CD4-positive, alpha-beta memory T cell (primary cell): ENCODE measurements at regions of chr17 and their contacts with region 1.

Region 1: DNA sequence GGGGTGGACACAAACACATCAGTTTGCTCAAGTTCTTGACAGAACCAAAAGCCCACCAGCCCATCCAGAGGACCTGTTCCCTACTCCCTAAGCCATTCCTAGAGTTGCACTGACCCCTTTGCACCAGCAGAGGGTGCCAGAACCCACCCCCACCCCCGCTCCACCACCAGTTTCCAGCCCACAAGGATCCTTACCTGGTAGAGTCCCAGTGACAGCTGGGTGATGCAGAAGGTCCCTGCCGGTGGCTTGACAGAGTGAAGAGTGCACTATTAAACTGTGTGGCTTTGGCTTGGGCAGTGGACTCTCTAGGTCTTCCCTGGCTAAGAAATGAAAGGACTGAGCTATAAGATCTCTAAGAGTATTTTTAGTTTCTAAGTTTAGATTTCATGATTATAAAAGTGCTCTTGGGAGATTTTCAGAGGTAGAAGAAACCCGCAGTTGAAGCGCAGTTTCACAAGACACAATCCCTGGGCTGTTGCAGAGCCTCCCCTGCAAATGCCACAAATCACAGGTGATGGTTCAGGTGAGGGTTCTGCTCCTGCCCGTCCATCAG is 73.3 kb upstream of the MTMR4 start:
- DNase-seq: peak; percentile 46 to 54 (median 48)
- H3K4me3 ChIP-seq: no peak overlapping the region
- H3K4me3 Mint-ChIP-seq: no peak overlapping the region
- H3K27ac ChIP-seq: no peak overlapping the region
- H3K27ac Mint-ChIP-seq: no peak overlapping the region
- H3K4me1 ChIP-seq: no peaks in the 10 kb centered on the region
- H3K4me1 Mint-ChIP-seq: peaks cover 0 to 4% (median 2%) of the 10 kb centered on the region in 4 donors
- H3K27me3 ChIP-seq: no peaks in the 10 kb centered on the region
- H3K27me3 Mint-ChIP-seq: peaks cover 0 to 2% of the 10 kb centered on the region in 2 donors

Region 2: DNA sequence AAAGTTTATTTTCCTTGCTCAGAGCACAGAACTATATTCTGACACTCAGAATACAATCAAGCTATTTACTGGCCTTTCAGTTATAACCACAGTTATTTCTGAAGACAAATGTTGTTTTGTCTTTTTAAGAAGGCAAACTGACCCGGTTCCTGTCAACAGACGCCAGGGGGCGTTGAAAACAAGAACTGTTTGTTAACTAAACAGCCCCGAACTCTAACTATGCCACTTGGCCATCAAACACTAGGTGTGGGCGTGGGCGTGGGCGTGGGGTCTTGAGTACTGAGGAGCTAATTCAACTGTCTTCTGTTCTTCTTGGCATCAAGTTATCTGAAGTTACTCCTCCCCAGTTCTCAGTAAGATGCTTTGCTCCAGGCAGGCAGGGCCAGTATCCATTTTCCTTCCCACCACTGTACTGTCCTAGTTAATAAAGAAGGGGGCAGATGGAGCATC is 10.1 kb before region 1 on chr17:
- CTCF ChIA-PET with region 1: interaction called, 69 read pairs
- POLR2A ChIA-PET with region 1: interaction called, 3 read pairs
- intact Hi-C with region 1: no loop called
- DNase-seq: peak; percentile 25 to 56 (median 36)
- H3K4me3 ChIP-seq: no peak overlapping the region
- H3K4me3 Mint-ChIP-seq: no peak overlapping the region
- H3K27ac ChIP-seq: no peak overlapping the region
- H3K27ac Mint-ChIP-seq: peak overlapping the region in 1 of 7 donors; percentile 19
- H3K4me1 ChIP-seq: no peaks in the 10 kb centered on the region
- H3K4me1 Mint-ChIP-seq: peaks cover 0 to 2% (median under 1%) of the 10 kb centered on the region in 4 donors
- H3K27me3 ChIP-seq: no peaks in the 10 kb centered on the region
- H3K27me3 Mint-ChIP-seq: no peaks in the 10 kb centered on the region

Region 3: DNA sequence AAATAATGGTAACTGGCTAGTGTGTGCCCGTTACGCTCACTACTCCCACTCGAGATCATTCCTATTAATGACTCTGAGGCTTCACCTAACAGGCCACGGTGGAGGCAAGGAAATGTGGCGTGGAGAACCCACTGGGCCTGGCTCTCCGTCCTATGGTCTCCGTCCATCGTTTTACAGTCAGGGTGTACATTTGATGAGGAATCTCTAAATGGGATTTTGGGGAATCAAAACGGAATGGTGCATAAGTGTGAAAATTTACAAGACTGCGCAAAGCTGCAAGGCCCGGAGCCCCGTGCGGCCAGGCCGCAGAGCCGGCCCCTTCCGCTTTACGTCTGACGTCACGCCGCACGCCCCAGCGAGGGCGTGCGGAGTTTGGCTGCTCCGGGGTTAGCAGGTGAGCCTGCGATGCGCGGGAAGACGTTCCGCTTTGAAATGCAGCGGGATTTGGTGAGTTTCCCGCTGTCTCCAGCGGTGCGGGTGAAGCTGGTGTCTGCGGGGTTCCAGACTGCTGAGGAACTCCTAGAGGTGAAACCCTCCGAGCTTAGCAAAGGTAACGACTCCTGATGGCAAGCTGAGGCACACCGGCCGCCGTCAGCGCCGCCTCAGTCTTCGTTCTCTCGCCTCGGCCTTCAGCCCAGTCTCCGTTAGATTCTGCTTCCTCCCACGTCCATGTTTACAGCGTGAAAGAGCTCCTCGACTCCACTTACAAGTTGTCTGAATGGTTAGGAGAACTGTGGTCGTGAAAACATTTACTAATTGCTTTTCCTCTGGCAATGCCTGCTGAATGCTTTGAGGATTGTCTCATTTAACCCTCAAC is 104.7 kb after region 1 on chr17 and contains the start of gene RAD51C:
- CTCF ChIA-PET with region 1: interaction called, 8 read pairs
- POLR2A ChIA-PET with region 1: no interaction called
- intact Hi-C with region 1: loop called (anchors 1 kb)
- DNase-seq: peak; percentile 77 to 85 (median 84)
- H3K4me3 ChIP-seq: peak within 1 kb of the TSS; percentile 77 to 83
- H3K4me3 Mint-ChIP-seq: peak within 1 kb of the TSS; percentile 85 to 97 (median 93)
- H3K27ac ChIP-seq: peak within 1 kb of the TSS; percentile 72
- H3K27ac Mint-ChIP-seq: peak within 1 kb of the TSS; percentile 73 to 98 (median 92)
- H3K4me1 ChIP-seq: peaks cover 29% of the 10 kb centered on the region
- H3K4me1 Mint-ChIP-seq: peaks cover 18 to 27% (median 23%) of the 10 kb centered on the region in 4 donors
- H3K27me3 ChIP-seq: no peaks in the 10 kb centered on the region
- H3K27me3 Mint-ChIP-seq: no peaks in the 10 kb centered on the region
- total RNA-seq, gene RAD51C: 25.8 to 28.2 TPM

Region 4: GRCh38 chr17:58710936-58711775 is 123.4 kb after region 1 on chr17:
- CTCF ChIA-PET with region 1: no interaction called
- POLR2A ChIA-PET with region 1: no interaction called
- intact Hi-C with region 1: loop called (anchors 5 kb)
- DNase-seq: peak in 4 of 5 donors; percentile 22 to 38 (median 36)
- H3K4me3 ChIP-seq: no peak overlapping the region
- H3K4me3 Mint-ChIP-seq: no peak overlapping the region
- H3K27ac ChIP-seq: no peak overlapping the region
- H3K27ac Mint-ChIP-seq: no peak overlapping the region
- H3K4me1 ChIP-seq: no peaks in the 10 kb centered on the region
- H3K4me1 Mint-ChIP-seq: peaks cover 0 to 6% (median under 1%) of the 10 kb centered on the region in 4 donors
- H3K27me3 ChIP-seq: no peaks in the 10 kb centered on the region
- H3K27me3 Mint-ChIP-seq: no peaks in the 10 kb centered on the region

Region 5: DNA sequence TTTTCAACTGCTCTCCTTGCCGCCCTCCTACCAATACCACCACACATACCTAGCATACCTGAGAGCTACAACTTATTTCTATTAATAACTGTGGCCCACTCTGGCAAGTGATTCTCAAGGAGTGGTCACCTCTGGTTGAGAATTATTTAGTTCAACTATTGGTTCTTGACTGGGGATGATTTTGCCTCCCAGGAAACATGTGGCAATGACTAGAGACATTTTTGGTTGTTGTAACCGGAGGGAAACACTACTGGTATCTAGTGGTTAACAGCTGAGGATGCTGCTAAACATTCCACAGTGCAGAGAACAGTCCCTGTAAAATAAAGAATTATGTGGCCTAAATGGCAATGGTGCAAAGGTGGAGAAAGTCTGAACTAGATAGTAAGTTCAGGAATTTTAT is 422.2 kb after region 1 on chr17:
- CTCF ChIA-PET with region 1: interaction called, 50 read pairs
- POLR2A ChIA-PET with region 1: interaction called, 3 read pairs
- intact Hi-C with region 1: loop called (anchors 1 kb)
- DNase-seq: no peak
- H3K4me3 ChIP-seq: no peak overlapping the region
- H3K4me3 Mint-ChIP-seq: no peak overlapping the region
- H3K27ac ChIP-seq: no peak overlapping the region
- H3K27ac Mint-ChIP-seq: peak overlapping the region in 3 of 7 donors; percentile 18 to 76 (median 45)
- H3K4me1 ChIP-seq: no peaks in the 10 kb centered on the region
- H3K4me1 Mint-ChIP-seq: peaks cover 0 to under 1% (median 0%) of the 10 kb centered on the region in 4 donors
- H3K27me3 ChIP-seq: no peaks in the 10 kb centered on the region
- H3K27me3 Mint-ChIP-seq: no peaks in the 10 kb centered on the region